HEK293T (cell line): ENCODE measurements at regions of chr4 and their contacts with region 1.

Region 1: GRCh38 chr4:145618932-145619638 is at the start of gene MMAA:
- DNase-seq: peak; percentile 96

Region 2: GRCh38 chr4:145234091-145234706 is 384.9 kb before region 1 on chr4:
- CTCF ChIA-PET with region 1: interaction called, 11 read pairs
- POLR2A ChIA-PET with region 1: interaction called, 3 read pairs
- DNase-seq: peak; percentile 50

Region 3: DNA sequence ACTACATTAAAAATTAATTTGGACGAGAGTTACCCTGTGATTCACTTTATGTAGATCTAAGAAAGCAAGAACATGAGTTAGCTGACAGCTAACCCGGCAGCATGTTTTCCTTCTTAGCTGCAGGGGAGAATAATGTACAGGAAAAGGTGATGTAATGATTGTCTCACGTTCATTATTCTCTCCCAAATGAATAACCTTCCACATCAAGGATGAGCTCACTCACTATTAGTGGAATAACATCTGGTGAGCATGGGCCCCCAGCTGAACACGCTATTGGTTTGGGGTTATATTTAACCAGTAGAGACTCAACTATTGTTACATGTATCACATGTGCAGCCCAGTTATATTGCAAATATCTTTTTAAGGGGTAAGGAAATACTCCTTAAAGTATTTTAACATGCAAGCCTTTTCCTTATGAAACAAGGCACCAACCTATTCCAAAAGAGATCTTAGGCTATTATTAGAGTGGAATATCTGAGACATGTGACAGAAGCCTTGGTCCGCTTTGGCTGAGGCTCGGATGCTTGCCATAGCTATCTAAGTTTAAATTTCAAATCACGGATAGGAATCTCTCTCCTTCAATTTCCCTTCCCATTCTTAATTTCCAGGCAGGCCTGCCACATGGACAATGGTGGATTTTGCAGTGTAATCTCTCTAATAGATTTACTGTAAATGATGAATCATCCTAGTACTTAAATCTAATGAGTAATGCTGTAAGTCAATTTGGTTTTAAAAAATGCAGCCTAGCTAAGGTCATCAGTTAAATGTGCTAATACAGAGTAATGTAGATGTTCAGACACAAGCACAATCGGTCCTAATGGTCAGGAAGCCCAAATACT is 339.7 kb before region 1 on chr4:
- CTCF ChIA-PET with region 1: no interaction called
- POLR2A ChIA-PET with region 1: no interaction called
- DNase-seq: no peak

Region 4: GRCh38 chr4:145390571-145390970 is 228.5 kb before region 1 on chr4:
- CTCF ChIA-PET with region 1: no interaction called
- POLR2A ChIA-PET with region 1: no interaction called
- DNase-seq: no peak

Region 5: DNA sequence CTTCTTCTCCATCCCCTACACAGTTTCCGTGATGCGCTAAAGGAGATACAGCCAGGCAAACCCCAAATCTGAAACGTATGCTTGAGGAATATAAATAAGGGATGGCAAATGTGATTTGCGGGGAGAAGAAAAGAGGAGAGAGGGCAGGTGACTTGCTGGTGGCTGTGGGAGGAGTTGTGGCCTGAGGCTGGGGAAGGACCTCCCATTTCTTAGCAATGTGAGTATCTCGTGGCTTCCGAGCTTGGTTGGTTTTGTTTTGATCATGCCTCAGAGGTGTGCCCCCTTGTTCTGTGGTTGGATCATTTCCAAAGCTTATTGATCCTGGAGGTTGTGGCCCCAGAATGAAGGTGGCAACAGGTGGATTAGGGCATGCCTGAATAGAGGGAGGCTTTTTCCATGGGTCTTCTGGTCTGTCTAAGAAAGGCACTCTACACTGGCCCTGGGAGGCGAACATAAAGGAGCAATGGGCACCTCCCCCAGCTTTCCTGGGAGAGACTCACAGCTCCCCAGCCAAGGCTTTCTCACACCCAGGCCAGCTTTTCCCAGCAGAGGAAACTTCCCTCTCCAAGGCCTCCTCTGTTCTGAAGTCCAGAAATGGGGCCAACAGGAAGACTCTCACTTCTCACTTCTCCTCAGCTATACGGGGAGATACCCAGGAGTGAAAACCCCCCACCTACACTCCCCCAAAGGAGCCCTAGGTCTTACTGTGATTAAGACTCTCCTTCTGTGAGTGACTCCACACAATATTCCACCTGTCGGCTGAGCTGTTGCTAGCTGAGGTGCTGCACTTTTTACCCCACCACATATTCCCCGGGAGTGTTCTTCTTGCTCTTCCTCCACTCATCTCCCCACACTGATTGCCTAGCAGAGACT is 100.9 kb after region 1 on chr4:
- CTCF ChIA-PET with region 1: no interaction called
- POLR2A ChIA-PET with region 1: no interaction called
- DNase-seq: no peak

Region 6: GRCh38 chr4:145755802-145756201 is 136.7 kb after region 1 on chr4:
- CTCF ChIA-PET with region 1: no interaction called
- POLR2A ChIA-PET with region 1: no interaction called
- DNase-seq: no peak